CD4-positive, alpha-beta T cell (primary cell): ENCODE measurements at regions of chr17 and their contacts with region 1.

Region 1: GRCh38 chr17:31858642-31859473 is at the start of gene COPRS:
- DNase-seq: peak; percentile 63 to 92 (median 78)
- ATAC-seq: peak; percentile 85
- H3K4me3 ChIP-seq: peak within 1 kb of the TSS; percentile 69
- H3K4me3 Mint-ChIP-seq: peak within 1 kb of the TSS; percentile 87
- H3K27ac ChIP-seq: no peak within 1 kb of the TSS
- H3K27ac Mint-ChIP-seq: no peak within 1 kb of the TSS
- H3K4me1 ChIP-seq: peaks cover 15% of the 10 kb centered on the region
- H3K4me1 Mint-ChIP-seq: peaks cover 16% of the 10 kb centered on the region
- H3K27me3 ChIP-seq: no peaks in the 10 kb centered on the region
- H3K27me3 Mint-ChIP-seq: no peaks in the 10 kb centered on the region
- CTCF ChIP-seq: no peak
- total RNA-seq, gene COPRS: 2.2 to 2.3 TPM

Region 2: DNA sequence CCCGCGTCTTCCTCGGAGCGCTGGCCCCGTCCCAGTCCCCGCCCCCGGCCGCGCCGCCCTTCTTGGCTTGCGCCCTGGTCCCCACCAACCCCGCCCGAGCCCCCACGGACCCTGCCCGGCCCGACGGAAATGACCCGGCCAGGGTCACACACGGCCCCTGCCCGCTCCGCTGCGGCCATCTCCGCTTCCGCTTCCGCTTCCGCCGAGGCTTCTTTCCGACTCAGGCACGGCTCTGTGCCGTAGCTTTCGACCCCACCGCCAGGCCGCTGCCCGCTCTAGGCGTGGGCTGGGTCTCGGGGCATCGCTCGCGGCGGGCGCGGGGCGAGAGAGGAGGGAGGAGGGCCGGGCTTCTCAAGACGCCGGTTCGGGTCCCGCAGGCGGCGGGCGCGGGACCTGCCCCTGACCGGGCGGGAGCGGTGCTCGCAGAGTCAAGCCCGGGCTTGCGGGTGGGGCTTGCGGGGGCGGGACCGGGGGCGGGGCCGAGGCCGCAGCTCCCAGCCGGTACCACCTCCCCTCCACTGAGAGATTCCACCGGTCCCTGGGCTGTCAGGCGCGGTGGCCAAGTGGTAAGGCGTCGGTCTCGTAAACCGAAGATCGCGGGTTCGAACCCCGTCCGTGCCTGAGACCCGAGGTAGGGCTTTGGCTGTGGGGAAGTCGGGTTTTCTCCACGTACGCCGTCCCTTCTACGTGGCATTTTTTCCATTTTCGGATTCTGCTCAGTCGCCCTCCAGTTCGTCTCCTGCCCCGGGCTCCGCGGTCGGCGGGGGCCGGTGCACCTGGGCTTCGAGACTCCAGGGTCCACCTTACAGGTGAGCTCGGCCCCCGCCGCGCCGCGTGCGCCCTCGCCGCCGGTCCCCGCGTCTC is 309.1 kb before region 1 on chr17:
- CTCF ChIA-PET with region 1: no interaction called
- POLR2A ChIA-PET with region 1: no interaction called
- intact Hi-C with region 1: loop called in 1 of 2 experiments (anchors 5 kb)
- DNase-seq: peak; percentile 78 to 93 (median 87)
- ATAC-seq: peak; percentile 87
- H3K4me3 ChIP-seq: peak overlapping the region; percentile 74
- H3K4me3 Mint-ChIP-seq: peak overlapping the region; percentile 96
- H3K27ac ChIP-seq: peak overlapping the region in 1 of 2 donors; percentile 56
- H3K27ac Mint-ChIP-seq: peak overlapping the region; percentile 76
- H3K4me1 ChIP-seq: peaks cover 15% of the 10 kb centered on the region
- H3K4me1 Mint-ChIP-seq: peaks cover 23% of the 10 kb centered on the region
- H3K27me3 ChIP-seq: no peaks in the 10 kb centered on the region
- H3K27me3 Mint-ChIP-seq: no peaks in the 10 kb centered on the region
- CTCF ChIP-seq: no peak

Region 3: GRCh38 chr17:31820691-31821435 is 38.0 kb before region 1 on chr17:
- CTCF ChIA-PET with region 1: no interaction called
- POLR2A ChIA-PET with region 1: no interaction called
- intact Hi-C with region 1: no loop called
- DNase-seq: no peak
- ATAC-seq: no peak
- H3K4me3 ChIP-seq: no peak overlapping the region
- H3K4me3 Mint-ChIP-seq: no peak overlapping the region
- H3K27ac ChIP-seq: no peak overlapping the region
- H3K27ac Mint-ChIP-seq: no peak overlapping the region
- H3K4me1 ChIP-seq: no peaks in the 10 kb centered on the region
- H3K4me1 Mint-ChIP-seq: no peaks in the 10 kb centered on the region
- H3K27me3 ChIP-seq: no peaks in the 10 kb centered on the region
- H3K27me3 Mint-ChIP-seq: no peaks in the 10 kb centered on the region
- CTCF ChIP-seq: no peak

Region 4: GRCh38 chr17:31900877-31901276 is 42.0 kb after region 1 on chr17:
- CTCF ChIA-PET with region 1: interaction called, 15 read pairs
- POLR2A ChIA-PET with region 1: interaction called, 6 read pairs
- intact Hi-C with region 1: loop called in 1 of 2 experiments (anchors 1 kb)
- DNase-seq: no peak
- ATAC-seq: no peak
- H3K4me3 ChIP-seq: peak overlapping the region; percentile 89
- H3K4me3 Mint-ChIP-seq: no peak overlapping the region
- H3K27ac ChIP-seq: peak overlapping the region; percentile 46 to 68
- H3K27ac Mint-ChIP-seq: no peak overlapping the region
- H3K4me1 ChIP-seq: peaks cover 17% of the 10 kb centered on the region
- H3K4me1 Mint-ChIP-seq: peaks cover 9% of the 10 kb centered on the region
- H3K27me3 ChIP-seq: no peaks in the 10 kb centered on the region
- H3K27me3 Mint-ChIP-seq: no peaks in the 10 kb centered on the region
- CTCF ChIP-seq: no peak

Region 5: GRCh38 chr17:31931756-31932155 is 72.9 kb after region 1 on chr17:
- CTCF ChIA-PET with region 1: no interaction called
- POLR2A ChIA-PET with region 1: no interaction called
- intact Hi-C with region 1: loop called in 1 of 2 experiments (anchors 2 kb)
- DNase-seq: no peak
- ATAC-seq: no peak
- H3K4me3 ChIP-seq: no peak overlapping the region
- H3K4me3 Mint-ChIP-seq: no peak overlapping the region
- H3K27ac ChIP-seq: no peak overlapping the region
- H3K27ac Mint-ChIP-seq: no peak overlapping the region
- H3K4me1 ChIP-seq: peaks cover 6% of the 10 kb centered on the region
- H3K4me1 Mint-ChIP-seq: no peaks in the 10 kb centered on the region
- H3K27me3 ChIP-seq: no peaks in the 10 kb centered on the region
- H3K27me3 Mint-ChIP-seq: no peaks in the 10 kb centered on the region
- CTCF ChIP-seq: no peak